ENCODE measurements at regions of chr1 and their contacts with region 1.

Region 1: GRCh38 chr1:145858894-145859490 is at the start of gene PIAS3:
- DNase-seq: peak; percentile 91
- ATAC-seq: peak; percentile 85
- H3K4me3 ChIP-seq: peak within 1 kb of the TSS; percentile 74 to 96 (median 94)
- H3K4me3 Mint-ChIP-seq: peak within 1 kb of the TSS; percentile 98
- H3K27ac ChIP-seq: peak within 1 kb of the TSS; percentile 57 to 72
- H3K27ac Mint-ChIP-seq: peak within 1 kb of the TSS; percentile 94
- H3K4me1 ChIP-seq: peaks cover 9 to 14% of the 10 kb centered on the region in 2 donors
- H3K4me1 Mint-ChIP-seq: peaks cover 11% of the 10 kb centered on the region
- H3K27me3 ChIP-seq: peaks cover 0 to 7% (median 1%) of the 10 kb centered on the region in 4 experiments
- H3K27me3 Mint-ChIP-seq: peaks cover 9% of the 10 kb centered on the region
- CTCF ChIP-seq: no peak
- total RNA-seq, gene PIAS3: 45.0 and 51.0 TPM in 2 replicates

Region 2: GRCh38 chr1:145823565-145824498 is 35.2 kb before region 1 on chr1 and contains the starts of genes POLR3C and RNF115:
- CTCF ChIA-PET with region 1: interaction called, 10 read pairs
- POLR2A ChIA-PET with region 1: interaction called, 11 read pairs
- intact Hi-C with region 1: loop called (anchors 1 kb)
- DNase-seq: peak; percentile 91
- ATAC-seq: peak; percentile 95
- H3K4me3 ChIP-seq: peak within 1 kb of the TSS; percentile 66 to 97 (median 82)
- H3K4me3 Mint-ChIP-seq: peak within 1 kb of the TSS; percentile 98
- H3K27ac ChIP-seq: peak within 1 kb of the TSS; percentile 61 to 89
- H3K27ac Mint-ChIP-seq: peak within 1 kb of the TSS; percentile 97
- H3K4me1 ChIP-seq: peaks cover 12 to 13% of the 10 kb centered on the region in 2 donors
- H3K4me1 Mint-ChIP-seq: peaks cover 28% of the 10 kb centered on the region
- H3K27me3 ChIP-seq: no peaks in the 10 kb centered on the region
- H3K27me3 Mint-ChIP-seq: no peaks in the 10 kb centered on the region
- CTCF ChIP-seq: no peak
- total RNA-seq, gene POLR3C: 48.0 and 49.3 TPM in 2 replicates
- total RNA-seq, gene RNF115: 19.8 and 21.7 TPM in 2 replicates

Region 3: DNA sequence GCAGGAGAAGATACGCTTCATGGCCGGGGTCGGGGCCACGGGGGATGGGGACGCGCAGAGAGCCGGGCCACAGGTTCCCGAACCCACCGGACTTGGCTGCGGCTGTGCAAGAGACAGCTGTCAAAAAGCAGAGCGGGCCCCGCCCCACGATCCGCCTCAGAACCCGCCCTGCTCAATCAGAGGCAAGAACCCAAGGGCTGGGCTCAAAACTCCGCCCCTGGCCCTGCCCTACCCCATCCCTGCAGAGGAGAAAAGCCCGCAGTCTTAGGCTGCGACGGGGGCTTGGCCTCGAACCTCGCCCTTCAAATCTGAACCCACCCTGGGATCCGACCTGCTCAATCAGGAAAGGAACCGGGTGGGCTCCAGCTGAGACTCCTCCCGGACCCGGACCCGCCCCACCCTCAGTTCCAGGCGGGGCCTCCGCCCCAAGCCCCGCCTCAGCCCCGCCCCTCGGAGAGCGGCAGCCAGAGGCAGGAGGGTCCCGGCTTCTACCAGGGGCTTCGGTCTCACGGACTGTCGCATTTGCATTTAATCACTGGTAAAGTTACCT is 26.8 kb after region 1 on chr1 and contains the start of gene ANKRD35:
- CTCF ChIA-PET with region 1: interaction called, 9 read pairs
- POLR2A ChIA-PET with region 1: interaction called, 22 read pairs
- intact Hi-C with region 1: loop called (anchors 1 kb)
- DNase-seq: peak; percentile 91
- ATAC-seq: peak; percentile 99
- H3K4me3 ChIP-seq: peak within 1 kb of the TSS; percentile 12 to 84 (median 63)
- H3K4me3 Mint-ChIP-seq: peak within 1 kb of the TSS; percentile 87
- H3K27ac ChIP-seq: no peak within 1 kb of the TSS
- H3K27ac Mint-ChIP-seq: peak within 1 kb of the TSS; percentile 26
- H3K4me1 ChIP-seq: peaks cover 11 to 12% of the 10 kb centered on the region in 2 donors
- H3K4me1 Mint-ChIP-seq: peaks cover 22% of the 10 kb centered on the region
- H3K27me3 ChIP-seq: peaks cover 0 to 24% (median 18%) of the 10 kb centered on the region in 4 experiments
- H3K27me3 Mint-ChIP-seq: peaks cover 29% of the 10 kb centered on the region
- CTCF ChIP-seq: no peak
- total RNA-seq, gene ANKRD35: not detected in 2 replicates

Region 4: GRCh38 chr1:145918144-145918992 is 59.4 kb after region 1 on chr1 and contains the start of gene PEX11B:
- CTCF ChIA-PET with region 1: interaction called, 5 read pairs
- POLR2A ChIA-PET with region 1: interaction called, 25 read pairs
- intact Hi-C with region 1: loop called (anchors 1 kb)
- DNase-seq: peak; percentile 97
- ATAC-seq: peak; percentile 90
- H3K4me3 ChIP-seq: peak within 1 kb of the TSS; percentile 69 to 98 (median 80)
- H3K4me3 Mint-ChIP-seq: peak within 1 kb of the TSS; percentile 92
- H3K27ac ChIP-seq: peak within 1 kb of the TSS; percentile 74 to 79
- H3K27ac Mint-ChIP-seq: peak within 1 kb of the TSS; percentile 95
- H3K4me1 ChIP-seq: peaks cover 15 to 24% of the 10 kb centered on the region in 2 donors
- H3K4me1 Mint-ChIP-seq: peaks cover 36% of the 10 kb centered on the region
- H3K27me3 ChIP-seq: no peaks in the 10 kb centered on the region
- H3K27me3 Mint-ChIP-seq: no peaks in the 10 kb centered on the region
- CTCF ChIP-seq: no peak
- total RNA-seq, gene PEX11B: 39.1 and 48.1 TPM in 2 replicates

Region 5: DNA sequence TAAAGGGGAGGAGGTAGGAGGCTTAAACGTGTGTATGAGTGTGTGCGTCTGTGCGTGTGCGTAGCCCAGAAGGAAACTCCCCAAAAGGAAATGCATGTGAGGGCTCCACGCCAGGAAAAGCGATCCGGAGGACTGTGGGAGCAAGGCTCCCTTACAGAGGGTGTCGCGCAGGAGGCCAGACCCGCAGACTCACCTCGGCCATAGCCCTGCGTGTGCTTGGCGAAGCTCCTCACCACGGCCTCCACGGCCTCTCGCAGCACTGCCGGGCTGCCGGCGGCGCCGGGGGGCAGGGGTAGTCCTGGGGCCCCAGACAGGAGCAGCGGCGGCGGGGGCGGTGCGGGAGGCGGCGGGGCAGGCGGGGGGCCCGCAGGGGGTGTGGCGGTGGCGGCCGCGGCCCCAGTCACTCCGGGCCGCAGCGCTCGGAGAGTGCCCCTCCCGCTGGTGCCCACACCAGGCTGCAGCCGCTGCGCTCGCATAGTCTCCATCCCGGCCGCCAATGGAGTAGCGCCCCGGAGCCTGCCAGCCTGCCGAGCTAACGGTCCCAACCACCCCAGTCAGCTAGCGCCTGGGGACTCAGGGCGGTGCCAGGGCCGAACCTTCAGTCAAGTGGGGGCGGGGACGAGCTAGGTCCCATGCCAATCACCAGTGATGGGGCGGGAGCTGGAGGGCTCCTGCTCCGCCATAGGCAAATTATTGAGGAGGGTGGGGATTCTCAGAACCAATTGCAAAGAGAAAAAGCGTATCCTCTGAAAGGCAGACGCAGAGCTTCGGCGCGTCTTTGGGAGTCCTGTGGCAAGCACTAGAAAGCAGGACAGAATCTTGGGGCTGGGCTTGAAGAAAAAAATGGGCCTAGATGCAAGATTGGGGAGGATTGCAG is 98.7 kb after region 1 on chr1 and contains the start of gene LIX1L:
- CTCF ChIA-PET with region 1: no interaction called
- POLR2A ChIA-PET with region 1: interaction called, 4 read pairs
- intact Hi-C with region 1: loop called (anchors 1 kb)
- DNase-seq: peak; percentile 96
- ATAC-seq: peak; percentile 89
- H3K4me3 ChIP-seq: peak within 1 kb of the TSS; percentile 64 to 88 (median 74)
- H3K4me3 Mint-ChIP-seq: peak within 1 kb of the TSS; percentile 99
- H3K27ac ChIP-seq: peak within 1 kb of the TSS; percentile 36 to 83
- H3K27ac Mint-ChIP-seq: peak within 1 kb of the TSS; percentile 96
- H3K4me1 ChIP-seq: peaks cover 45 to 65% of the 10 kb centered on the region in 2 donors
- H3K4me1 Mint-ChIP-seq: peaks cover 76% of the 10 kb centered on the region
- H3K27me3 ChIP-seq: no peaks in the 10 kb centered on the region
- H3K27me3 Mint-ChIP-seq: no peaks in the 10 kb centered on the region
- CTCF ChIP-seq: no peak
- total RNA-seq, gene LIX1L: 31.7 and 32.2 TPM in 2 replicates

Region 6: GRCh38 chr1:145996433-145997015 is 137.5 kb after region 1 on chr1 and contains the start of gene TXNIP:
- CTCF ChIA-PET with region 1: no interaction called
- POLR2A ChIA-PET with region 1: interaction called, 5 read pairs
- intact Hi-C with region 1: loop called (anchors 5 kb)
- DNase-seq: peak; percentile 89
- ATAC-seq: peak; percentile 72
- H3K4me3 ChIP-seq: peak within 1 kb of the TSS; percentile 81 to 100 (median 95)
- H3K4me3 Mint-ChIP-seq: peak within 1 kb of the TSS; percentile 95
- H3K27ac ChIP-seq: peak within 1 kb of the TSS; percentile 82 to 96
- H3K27ac Mint-ChIP-seq: peak within 1 kb of the TSS; percentile 100
- H3K4me1 ChIP-seq: peaks cover 56 to 67% of the 10 kb centered on the region in 2 donors
- H3K4me1 Mint-ChIP-seq: peaks cover 73% of the 10 kb centered on the region
- H3K27me3 ChIP-seq: no peaks in the 10 kb centered on the region
- H3K27me3 Mint-ChIP-seq: no peaks in the 10 kb centered on the region
- CTCF ChIP-seq: no peak
- total RNA-seq, gene TXNIP: 522 and 542 TPM in 2 replicates

Region 7: DNA sequence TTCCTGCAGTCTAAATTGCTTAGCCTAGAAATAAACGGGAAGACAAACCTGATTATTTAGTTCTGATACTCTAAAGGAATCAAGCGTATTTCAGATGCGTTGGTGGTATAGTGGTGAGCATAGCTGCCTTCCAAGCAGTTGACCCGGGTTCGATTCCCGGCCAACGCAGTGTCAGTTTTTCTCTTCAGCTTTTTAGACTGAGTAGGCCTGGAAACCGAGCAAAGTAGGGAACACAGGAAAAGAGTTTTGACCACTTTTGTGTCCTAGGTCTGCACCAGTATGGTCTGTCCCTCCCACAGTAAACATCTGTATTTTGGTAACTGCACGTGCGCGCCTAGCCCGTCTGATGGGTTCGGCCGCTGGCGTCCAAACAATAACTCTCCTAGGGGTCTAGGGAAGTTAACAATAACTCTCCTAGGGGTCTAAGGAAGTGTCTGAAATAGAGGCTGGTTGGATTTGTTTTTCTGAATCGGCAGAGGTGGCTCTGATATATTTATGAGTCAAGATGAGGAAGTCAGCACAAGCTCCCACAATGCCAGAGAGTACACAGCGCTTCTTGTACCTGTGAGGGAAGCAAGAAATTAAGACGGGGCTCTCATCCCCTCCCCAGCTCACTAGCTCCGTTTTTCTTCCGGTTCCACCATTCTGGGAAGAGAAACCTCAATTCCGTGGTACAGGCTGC is 178.1 kb after region 1 on chr1:
- CTCF ChIA-PET with region 1: interaction called, 3 read pairs
- POLR2A ChIA-PET with region 1: interaction called, 15 read pairs
- intact Hi-C with region 1: no loop called
- DNase-seq: peak; percentile 90
- ATAC-seq: peak; percentile 55
- H3K4me3 ChIP-seq: peak overlapping the region; percentile 84 to 96 (median 93)
- H3K4me3 Mint-ChIP-seq: peak overlapping the region; percentile 99
- H3K27ac ChIP-seq: peak overlapping the region; percentile 74 to 83
- H3K27ac Mint-ChIP-seq: peak overlapping the region; percentile 98
- H3K4me1 ChIP-seq: peaks cover 27 to 30% of the 10 kb centered on the region in 2 donors
- H3K4me1 Mint-ChIP-seq: peaks cover 37% of the 10 kb centered on the region
- H3K27me3 ChIP-seq: no peaks in the 10 kb centered on the region
- H3K27me3 Mint-ChIP-seq: no peaks in the 10 kb centered on the region
- CTCF ChIP-seq: no peak

Region 8: GRCh38 chr1:147214842-147215539 is 1356.0 kb after region 1 on chr1:
- CTCF ChIA-PET with region 1: no interaction called
- POLR2A ChIA-PET with region 1: no interaction called
- intact Hi-C with region 1: no loop called
- DNase-seq: no peak
- ATAC-seq: no peak
- H3K4me3 ChIP-seq: no peak overlapping the region
- H3K4me3 Mint-ChIP-seq: no peak overlapping the region
- H3K27ac ChIP-seq: no peak overlapping the region
- H3K27ac Mint-ChIP-seq: no peak overlapping the region
- H3K4me1 ChIP-seq: peaks cover 11 to 24% of the 10 kb centered on the region in 2 donors
- H3K4me1 Mint-ChIP-seq: peaks cover 27% of the 10 kb centered on the region
- H3K27me3 ChIP-seq: no peaks in the 10 kb centered on the region
- H3K27me3 Mint-ChIP-seq: no peaks in the 10 kb centered on the region
- CTCF ChIP-seq: no peak

Measured in B cell (primary cell).